Esophagus muscularis mucosa (tissue), 4 donors: ENCODE measurements at regions of chr5 and their contacts with region 1.

Region 1: GRCh38 chr5:140357726-140358093 is 2.3 kb upstream of the SLC4A9 start:
- DNase-seq: peak; percentile 96
- H3K4me3 ChIP-seq: peak overlapping the region; percentile 17 to 29 (median 24)
- H3K27ac ChIP-seq: no peak overlapping the region
- H3K4me1 ChIP-seq: peaks cover 4 to 11% (median 10%) of the 10 kb centered on the region in 4 donors
- H3K27me3 ChIP-seq: no peaks in the 10 kb centered on the region
- CTCF ChIP-seq: peak; percentile 88 to 97 (median 93)
- EP300 ChIP-seq: no peak
- POLR2A ChIP-seq: no peak

Region 2: GRCh38 chr5:140174465-140175366 is 183.0 kb before region 1 on chr5 and contains the start of gene CYSTM1:
- intact Hi-C with region 1: loop called (anchors 10 kb)
- DNase-seq: peak; percentile 98
- H3K4me3 ChIP-seq: peak within 1 kb of the TSS; percentile 74 to 98 (median 90)
- H3K27ac ChIP-seq: peak within 1 kb of the TSS; percentile 93 to 99 (median 98)
- H3K4me1 ChIP-seq: peaks cover 28 to 45% (median 44%) of the 10 kb centered on the region in 4 donors
- H3K27me3 ChIP-seq: no peaks in the 10 kb centered on the region
- CTCF ChIP-seq: peak in 1 of 3 experiments; percentile 26
- EP300 ChIP-seq: no peak
- POLR2A ChIP-seq: peak; percentile 84
- total RNA-seq, gene CYSTM1: 54.0 to 81.0 (median 67.8) TPM